Activated CD4-positive, alpha-beta memory T cell treated with anti-CD3 and anti-CD28 coated beads for 36 hours (primary cell): ENCODE measurements at regions of chr2 and their contacts with region 1.

Region 1: DNA sequence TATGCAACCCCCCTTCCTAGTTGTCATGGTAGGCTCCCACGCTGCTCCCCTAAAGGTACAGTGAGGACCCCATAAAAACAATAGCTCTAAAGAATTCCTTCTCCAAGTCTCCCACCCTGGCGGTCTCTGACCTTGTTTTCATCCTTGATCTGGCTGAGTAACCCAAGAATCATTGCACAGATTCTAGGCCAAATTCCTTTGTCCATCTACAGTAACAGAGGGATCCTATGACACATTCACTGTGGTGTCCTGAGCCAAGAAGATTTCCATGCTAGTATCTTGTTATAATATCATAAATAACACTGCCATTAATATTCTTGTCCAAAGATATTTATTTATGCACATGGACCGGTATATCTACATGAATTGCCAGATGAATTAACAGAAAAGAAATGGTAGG is 240.2 kb downstream of the CYP26B1 start:
- DNase-seq: no peak
- H3K4me3 Mint-ChIP-seq: no peak overlapping the region
- H3K27ac Mint-ChIP-seq: no peak overlapping the region
- H3K4me1 Mint-ChIP-seq: no peaks in the 10 kb centered on the region
- H3K27me3 Mint-ChIP-seq: peaks cover 11% of the 10 kb centered on the region

Region 2: DNA sequence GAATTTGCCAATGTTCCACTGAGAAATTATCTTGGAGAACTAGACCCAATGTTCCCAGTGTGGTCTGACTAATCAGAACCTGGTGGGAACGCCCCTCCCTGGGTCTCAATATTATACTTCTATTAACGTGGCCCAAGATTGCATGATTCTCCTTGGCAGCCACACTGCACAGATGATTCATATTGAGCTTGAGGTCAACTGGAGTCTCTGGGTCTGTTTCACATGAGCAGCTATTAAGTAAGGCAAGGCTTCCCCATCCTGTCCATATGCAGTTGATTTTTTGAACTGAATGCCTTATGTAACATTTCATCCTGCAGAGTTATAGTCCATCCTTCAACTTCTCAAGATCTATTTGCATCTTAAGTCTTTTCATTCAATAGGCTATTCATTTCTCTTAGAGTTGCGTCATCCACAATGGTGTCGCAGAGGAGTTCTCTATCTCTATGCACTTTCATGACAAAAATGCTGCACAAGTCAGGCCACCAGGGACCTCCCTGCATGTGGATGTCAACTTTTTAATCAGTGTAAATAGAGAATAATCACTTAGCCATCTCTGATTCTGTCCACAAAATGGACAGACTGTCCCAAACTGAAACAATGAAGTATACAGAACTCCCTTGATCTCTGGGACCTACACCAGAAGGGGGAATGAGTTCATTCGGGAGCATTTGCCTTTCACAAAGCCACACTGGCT is 17.4 kb before region 1 on chr2:
- CTCF ChIA-PET with region 1: no interaction called
- POLR2A ChIA-PET with region 1: no interaction called
- intact Hi-C with region 1: no loop called
- DNase-seq: no peak
- H3K4me3 Mint-ChIP-seq: no peak overlapping the region
- H3K27ac Mint-ChIP-seq: no peak overlapping the region
- H3K4me1 Mint-ChIP-seq: no peaks in the 10 kb centered on the region
- H3K27me3 Mint-ChIP-seq: peaks cover 10% of the 10 kb centered on the region

Region 3: GRCh38 chr2:71923887-71924533 is 16.5 kb after region 1 on chr2:
- CTCF ChIA-PET with region 1: interaction called, 16 read pairs
- POLR2A ChIA-PET with region 1: no interaction called
- intact Hi-C with region 1: no loop called
- DNase-seq: peak; percentile 63
- H3K4me3 Mint-ChIP-seq: no peak overlapping the region
- H3K27ac Mint-ChIP-seq: no peak overlapping the region
- H3K4me1 Mint-ChIP-seq: no peaks in the 10 kb centered on the region
- H3K27me3 Mint-ChIP-seq: no peaks in the 10 kb centered on the region

Region 4: DNA sequence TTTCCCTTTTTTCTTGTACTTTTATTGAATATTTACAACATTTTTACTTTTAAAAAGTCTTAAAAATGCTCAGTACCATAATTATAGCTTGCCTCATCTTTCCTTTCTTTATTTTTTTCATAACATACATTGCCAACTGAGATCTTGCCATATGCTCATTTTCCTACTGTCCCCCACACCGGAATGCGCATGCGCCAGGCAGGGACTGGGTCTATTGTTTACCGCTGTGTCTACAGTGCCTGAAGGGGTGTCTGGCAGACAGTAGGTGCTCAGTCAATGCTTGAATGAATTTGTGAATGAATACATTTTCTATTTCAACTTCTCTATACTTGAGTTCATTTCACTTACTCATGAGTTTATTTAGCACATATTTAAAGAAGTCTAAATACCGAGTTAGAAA is 82.2 kb after region 1 on chr2:
- CTCF ChIA-PET with region 1: no interaction called
- POLR2A ChIA-PET with region 1: no interaction called
- intact Hi-C with region 1: no loop called
- DNase-seq: no peak
- H3K4me3 Mint-ChIP-seq: no peak overlapping the region
- H3K27ac Mint-ChIP-seq: no peak overlapping the region
- H3K4me1 Mint-ChIP-seq: no peaks in the 10 kb centered on the region
- H3K27me3 Mint-ChIP-seq: no peaks in the 10 kb centered on the region